Activated B cell treated with CpG ODN at 0.5 μM for 24 hours (primary cell): ENCODE measurements at regions of chr3 and their contacts with region 1.

Region 1: GRCh38 chr3:169907463-169907862 is 3.9 kb upstream of the SAMD7 start:
- DNase-seq: no peak
- ATAC-seq: no peak
- H3K4me3 Mint-ChIP-seq: no peak overlapping the region
- H3K27ac Mint-ChIP-seq: no peak overlapping the region
- H3K4me1 Mint-ChIP-seq: no peaks in the 10 kb centered on the region
- H3K27me3 Mint-ChIP-seq: no peaks in the 10 kb centered on the region
- CTCF ChIP-seq: no peak

Region 2: DNA sequence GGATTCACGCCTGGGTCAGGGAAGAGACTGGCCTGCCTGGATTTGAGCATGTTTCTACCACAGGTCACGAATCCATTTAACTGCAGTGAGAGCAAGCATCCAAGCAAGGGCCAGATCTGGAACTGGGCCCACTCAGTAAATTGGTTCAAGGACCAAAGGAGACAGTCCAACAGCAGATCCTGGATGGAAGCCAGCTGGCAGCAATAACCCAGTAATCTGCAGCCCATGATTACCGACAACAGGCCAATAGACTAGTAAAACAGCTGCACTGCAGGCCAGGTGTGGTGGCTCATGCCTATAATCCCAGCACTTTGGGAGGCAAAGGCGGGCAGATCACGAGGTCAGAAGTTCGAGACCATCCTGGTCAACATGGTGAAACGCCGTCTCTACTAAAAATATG is 15.7 kb after region 1 on chr3:
- CTCF ChIA-PET with region 1: no interaction called
- POLR2A ChIA-PET with region 1: no interaction called
- intact Hi-C with region 1: loop called (anchors 2 kb)
- DNase-seq: no peak
- ATAC-seq: no peak
- H3K4me3 Mint-ChIP-seq: no peak overlapping the region
- H3K27ac Mint-ChIP-seq: peak overlapping the region; percentile 19
- H3K4me1 Mint-ChIP-seq: no peaks in the 10 kb centered on the region
- H3K27me3 Mint-ChIP-seq: no peaks in the 10 kb centered on the region
- CTCF ChIP-seq: no peak